ENCODE measurements at regions of chr10 and their contacts with region 1.

Region 1: GRCh38 chr10:14543046-14543903 is 212.6 kb upstream of the FRMD4A start:
- DNase-seq: peak; percentile 58
- H3K4me3 Mint-ChIP-seq: peak overlapping the region; percentile 52
- H3K27ac Mint-ChIP-seq: peak overlapping the region; percentile 91
- H3K4me1 Mint-ChIP-seq: peaks cover 81% of the 10 kb centered on the region
- H3K27me3 Mint-ChIP-seq: no peaks in the 10 kb centered on the region

Region 2: DNA sequence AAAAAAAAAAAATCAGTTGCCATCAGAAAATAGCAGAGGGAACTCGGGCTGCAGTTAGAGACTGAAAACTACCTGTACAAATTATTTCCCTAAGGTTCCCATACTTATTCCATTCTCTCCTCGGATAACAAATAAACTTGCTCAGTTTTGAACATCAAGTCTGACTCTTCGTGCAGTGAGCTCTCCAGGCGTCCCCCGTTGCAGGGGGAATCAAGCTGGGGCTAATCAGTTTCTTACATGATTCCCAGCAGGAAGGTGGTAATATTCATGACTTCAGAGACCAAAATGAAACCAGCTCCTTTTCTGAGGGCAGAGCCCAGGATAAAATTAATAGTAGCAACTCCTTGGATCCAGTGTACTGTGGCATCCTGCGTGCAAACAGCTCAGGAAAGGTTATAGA is 347.8 kb before region 1 on chr10:
- CTCF ChIA-PET with region 1: interaction called, 18 read pairs
- POLR2A ChIA-PET with region 1: no interaction called
- intact Hi-C with region 1: no loop called
- DNase-seq: no peak
- H3K4me3 Mint-ChIP-seq: no peak overlapping the region
- H3K27ac Mint-ChIP-seq: no peak overlapping the region
- H3K4me1 Mint-ChIP-seq: no peaks in the 10 kb centered on the region
- H3K27me3 Mint-ChIP-seq: peaks cover 38% of the 10 kb centered on the region

Region 3: GRCh38 chr10:14500172-14500765 is 43.0 kb before region 1 on chr10:
- CTCF ChIA-PET with region 1: interaction called, 23 read pairs
- POLR2A ChIA-PET with region 1: no interaction called
- intact Hi-C with region 1: loop called (anchors 2 kb)
- DNase-seq: no peak
- H3K4me3 Mint-ChIP-seq: no peak overlapping the region
- H3K27ac Mint-ChIP-seq: no peak overlapping the region
- H3K4me1 Mint-ChIP-seq: peaks cover 2% of the 10 kb centered on the region
- H3K27me3 Mint-ChIP-seq: no peaks in the 10 kb centered on the region

Region 4: DNA sequence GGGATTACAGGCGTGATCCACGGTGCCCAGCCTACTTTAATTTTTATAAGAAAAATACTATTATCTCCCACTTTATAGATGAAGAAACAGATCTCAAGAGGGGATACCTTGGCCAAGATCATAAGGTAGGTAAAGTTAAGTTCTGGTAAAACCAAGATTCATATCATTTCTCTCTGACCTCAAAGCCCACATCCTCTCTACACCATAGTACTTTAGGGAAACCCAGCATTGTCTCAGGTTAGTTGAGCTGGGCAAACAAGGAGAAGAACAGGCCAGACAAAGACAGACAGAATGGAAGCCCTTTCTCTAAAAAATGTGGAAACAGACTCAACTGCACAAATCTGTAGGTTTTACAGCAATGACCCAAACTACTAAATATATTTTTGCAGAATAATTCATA is 14.8 kb before region 1 on chr10:
- CTCF ChIA-PET with region 1: interaction called, 10 read pairs
- POLR2A ChIA-PET with region 1: interaction called, 5 read pairs
- intact Hi-C with region 1: no loop called
- DNase-seq: no peak
- H3K4me3 Mint-ChIP-seq: peak overlapping the region; percentile 50
- H3K27ac Mint-ChIP-seq: peak overlapping the region; percentile 80
- H3K4me1 Mint-ChIP-seq: peaks cover 89% of the 10 kb centered on the region
- H3K27me3 Mint-ChIP-seq: no peaks in the 10 kb centered on the region

Region 5: DNA sequence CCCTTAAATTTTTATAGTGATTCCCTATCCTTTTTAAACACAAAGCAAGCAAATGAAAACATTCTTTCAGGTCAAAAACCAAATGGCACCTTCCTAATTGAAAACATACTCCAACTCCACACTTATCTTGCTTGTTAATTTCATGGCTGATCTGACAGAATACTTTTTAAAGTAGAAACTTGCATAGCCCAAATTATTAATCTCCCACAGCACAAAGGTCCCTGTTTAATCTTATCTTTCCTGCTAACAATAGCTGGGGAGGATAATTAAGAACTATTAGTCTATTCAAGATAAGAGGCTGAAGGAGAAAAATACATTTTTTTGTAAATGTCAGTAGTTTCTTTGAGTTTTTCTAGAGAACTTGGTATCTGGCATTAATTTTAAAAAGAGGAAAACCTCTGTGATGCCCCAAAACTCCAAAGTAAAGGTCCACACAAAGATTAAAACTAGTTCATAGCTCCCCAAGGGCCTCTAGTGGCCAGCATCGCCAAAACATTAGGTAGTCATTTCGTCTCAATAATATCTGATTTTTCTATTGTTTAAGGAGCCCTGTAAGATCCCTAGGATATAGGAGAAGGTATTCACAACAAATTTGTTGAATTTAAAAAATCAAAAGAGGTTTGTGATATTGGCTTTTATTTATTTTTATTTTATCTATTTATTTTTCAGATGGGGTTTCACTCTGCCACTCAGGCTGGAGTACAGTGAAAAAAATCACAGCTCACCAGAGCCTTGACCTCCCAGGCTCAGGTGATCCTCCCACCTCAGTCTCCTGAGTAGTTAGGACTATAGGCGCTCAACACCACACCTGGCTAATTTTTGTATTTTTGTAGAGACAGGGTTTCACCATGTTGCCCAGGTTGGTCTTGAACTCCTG is 279.8 kb after region 1 on chr10:
- CTCF ChIA-PET with region 1: interaction called, 23 read pairs
- POLR2A ChIA-PET with region 1: no interaction called
- intact Hi-C with region 1: loop called (anchors 5 kb)
- DNase-seq: peak; percentile 56
- H3K4me3 Mint-ChIP-seq: no peak overlapping the region
- H3K27ac Mint-ChIP-seq: no peak overlapping the region
- H3K4me1 Mint-ChIP-seq: peaks cover 2% of the 10 kb centered on the region
- H3K27me3 Mint-ChIP-seq: peaks cover 1% of the 10 kb centered on the region

Measured in activated CD4-positive, alpha-beta memory T cell treated with anti-CD3 and anti-CD28 coated beads for 36 hours (primary cell).